AG04450 (cell line): ENCODE measurements at regions of chr21 and their contacts with region 1.

Region 1: DNA sequence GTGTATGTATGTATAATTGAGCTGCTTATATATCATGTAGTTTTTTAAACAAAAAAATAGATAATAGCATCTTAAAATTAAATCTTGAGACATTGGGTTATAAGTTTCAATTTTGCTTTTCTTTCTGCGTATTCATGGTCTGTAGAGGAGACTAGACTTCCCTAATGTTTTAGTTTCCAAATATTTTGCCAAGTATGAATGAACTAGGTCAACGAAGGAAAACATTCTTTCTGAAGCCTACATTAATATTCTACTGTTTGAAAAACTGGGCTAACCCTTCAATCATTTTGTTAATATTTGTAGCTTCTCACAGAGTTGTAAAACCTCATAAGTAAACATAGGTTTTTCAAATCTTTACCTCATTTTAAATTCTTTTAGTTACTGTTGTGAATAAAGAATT is 592.7 kb downstream of the USP25 start:
- DNase-seq: no peak
- H3K4me3 ChIP-seq: no peak overlapping the region
- H3K27ac ChIP-seq: no peak overlapping the region
- H3K27me3 ChIP-seq: no peaks in the 10 kb centered on the region
- CTCF ChIP-seq: no peak

Region 2: GRCh38 chr21:15992171-15992570 is 330.3 kb before region 1 on chr21:
- CTCF ChIA-PET with region 1: interaction called, 10 read pairs
- POLR2A ChIA-PET with region 1: no interaction called
- DNase-seq: no peak
- H3K4me3 ChIP-seq: no peak overlapping the region
- H3K27ac ChIP-seq: no peak overlapping the region
- H3K27me3 ChIP-seq: no peaks in the 10 kb centered on the region
- CTCF ChIP-seq: no peak

Region 3: DNA sequence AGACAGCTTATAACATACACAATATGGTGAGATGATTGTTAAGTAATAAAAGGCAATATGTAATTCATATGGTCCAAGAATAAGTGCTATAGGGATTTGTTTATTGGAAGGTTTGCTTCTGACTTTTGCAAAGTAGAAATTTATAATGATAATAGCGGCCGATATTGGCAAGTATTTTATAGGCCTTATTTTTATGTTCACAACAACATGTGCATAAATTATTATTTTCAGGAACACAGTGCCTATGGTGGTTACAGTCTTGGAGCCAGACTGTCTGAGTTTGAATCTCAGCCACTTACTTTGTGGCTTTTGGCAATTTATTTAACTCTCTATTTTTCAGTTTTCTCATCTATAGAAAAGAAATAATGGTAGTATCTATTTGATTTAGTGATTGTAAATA is 14.8 kb after region 1 on chr21:
- CTCF ChIA-PET with region 1: no interaction called
- POLR2A ChIA-PET with region 1: no interaction called
- DNase-seq: no peak
- H3K4me3 ChIP-seq: no peak overlapping the region
- H3K27ac ChIP-seq: no peak overlapping the region
- H3K27me3 ChIP-seq: no peaks in the 10 kb centered on the region
- CTCF ChIP-seq: no peak